Astrocyte of the cerebellum (primary cell): ENCODE measurements at regions of chr9 and their contacts with region 1.

Region 1: DNA sequence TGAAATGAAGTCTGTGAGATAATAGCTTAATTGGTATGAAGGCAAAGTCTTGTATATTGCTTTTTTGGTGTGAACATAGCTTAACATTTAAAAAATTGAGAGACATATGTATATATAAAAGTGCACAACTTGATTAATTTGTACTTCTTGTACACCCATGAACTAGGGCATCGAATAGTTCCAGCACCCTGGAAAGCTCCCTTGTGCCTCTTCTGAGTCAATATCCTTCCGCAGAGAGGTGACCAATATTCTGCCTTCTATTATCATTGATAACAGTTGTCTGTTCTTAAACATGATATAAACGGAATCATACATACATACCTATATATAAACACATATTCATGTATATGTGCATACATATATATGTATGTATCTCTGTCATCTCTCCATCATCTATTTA is 185.4 kb downstream of the PHF2 start:
- DNase-seq: no peak
- H3K4me3 ChIP-seq: no peak overlapping the region
- CTCF ChIP-seq: no peak

Region 2: DNA sequence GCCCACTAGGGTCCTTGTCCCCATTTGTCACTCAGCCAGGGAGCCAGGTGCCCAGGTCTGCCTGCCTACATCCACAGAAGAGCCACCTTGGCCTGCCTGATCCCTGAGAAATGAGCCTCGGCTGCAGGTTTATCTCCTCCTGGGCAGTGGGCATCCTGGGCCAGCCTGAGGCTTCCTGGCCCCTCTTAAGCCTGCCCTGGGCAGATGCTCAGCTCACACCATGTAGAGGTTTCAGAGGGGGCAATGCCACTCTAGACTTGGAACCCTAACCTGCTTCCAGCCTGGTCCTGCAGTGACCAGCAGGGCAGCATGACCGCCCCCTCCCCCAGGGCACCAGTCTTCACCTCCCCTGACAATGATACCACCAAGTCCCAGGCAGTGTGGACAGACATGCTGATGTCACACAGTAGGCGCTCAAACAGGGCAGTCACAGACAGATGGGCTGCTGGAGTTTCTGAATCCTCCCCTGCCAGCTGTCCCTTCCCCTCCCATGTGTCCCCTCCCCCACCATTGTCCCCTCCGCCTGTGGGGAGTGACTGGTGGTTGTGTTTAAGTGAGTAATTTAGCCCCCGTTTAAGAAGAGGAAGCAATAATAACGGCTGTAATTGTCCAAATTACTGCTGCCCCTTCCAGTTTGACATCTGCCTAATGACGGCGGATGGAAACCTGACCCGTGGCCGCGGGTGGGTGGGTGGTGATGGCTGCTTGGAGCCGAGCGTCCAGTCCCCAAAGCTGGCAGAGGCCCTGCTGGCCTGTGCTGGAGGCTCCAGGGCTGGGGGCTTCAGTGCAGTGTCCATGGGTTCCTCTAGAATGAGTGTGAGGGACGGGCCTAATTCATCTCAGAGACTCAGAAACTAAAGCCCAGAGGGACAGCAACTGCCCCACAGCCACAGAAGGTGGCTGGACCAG is 45.6 kb after region 1 on chr9:
- in situ Hi-C with region 1: no loop called
- DNase-seq: no peak
- H3K4me3 ChIP-seq: no peak overlapping the region
- CTCF ChIP-seq: no peak

Region 3: GRCh38 chr9:93871294-93871693 is 109.5 kb after region 1 on chr9:
- in situ Hi-C with region 1: loop called (anchors 10 kb)
- DNase-seq: no peak
- H3K4me3 ChIP-seq: no peak overlapping the region
- CTCF ChIP-seq: no peak